Colonic mucosa (tissue), 4 donors: ENCODE measurements at regions of chr2 and their contacts with region 1.

Region 1: DNA sequence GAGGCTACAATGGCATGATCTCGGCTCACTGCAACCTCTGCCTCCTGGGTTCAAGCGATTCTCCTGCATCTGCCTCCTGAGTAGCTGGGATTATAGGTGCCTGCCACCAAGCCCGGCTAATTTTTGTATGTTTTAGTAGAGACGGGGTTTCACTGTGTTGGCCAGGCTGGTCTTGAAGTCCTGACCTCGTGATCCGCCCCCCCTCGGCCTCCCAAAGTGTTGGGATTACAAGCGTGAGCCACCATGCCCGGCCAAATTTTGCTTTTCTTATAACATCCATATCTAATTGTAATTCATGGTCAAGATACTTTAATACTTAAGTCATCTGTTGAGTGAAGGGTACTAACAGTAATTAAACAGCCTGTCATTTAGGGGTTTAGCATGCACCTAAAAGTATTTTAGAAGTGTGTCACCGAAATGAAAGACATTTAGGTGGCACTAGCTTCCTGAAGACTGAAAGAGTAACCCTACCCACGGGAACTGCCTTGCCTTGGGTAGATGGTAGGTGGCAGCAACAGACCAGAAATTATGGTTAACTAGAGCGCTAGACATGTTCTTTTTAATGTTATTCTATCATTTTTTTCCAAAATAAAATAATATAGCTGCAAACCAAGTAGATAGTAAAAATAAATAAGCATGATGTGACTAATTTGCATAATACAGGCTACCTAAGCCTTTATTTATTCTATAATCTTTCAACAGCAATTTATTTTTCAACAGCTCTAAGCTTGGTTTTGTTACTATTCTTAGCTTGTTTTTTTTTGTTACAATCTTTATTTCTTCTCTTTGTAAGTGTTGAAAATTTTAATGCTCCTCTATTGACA is 8.6 kb upstream of the ACYP2 start:
- DNase-seq: peak; percentile 38
- H3K4me3 ChIP-seq: no peak overlapping the region
- H3K27ac ChIP-seq: no peak overlapping the region
- H3K4me1 ChIP-seq: peaks cover 3% of the 10 kb centered on the region
- H3K27me3 ChIP-seq: no peaks in the 10 kb centered on the region
- CTCF ChIP-seq: peak; percentile 59

Region 2: GRCh38 chr2:54394392-54394791 is 287.5 kb after region 1 on chr2:
- intact Hi-C with region 1: no loop called
- DNase-seq: no peak
- H3K4me3 ChIP-seq: no peak overlapping the region
- H3K27ac ChIP-seq: no peak overlapping the region
- H3K4me1 ChIP-seq: no peaks in the 10 kb centered on the region
- H3K27me3 ChIP-seq: no peaks in the 10 kb centered on the region
- CTCF ChIP-seq: no peak

Region 3: DNA sequence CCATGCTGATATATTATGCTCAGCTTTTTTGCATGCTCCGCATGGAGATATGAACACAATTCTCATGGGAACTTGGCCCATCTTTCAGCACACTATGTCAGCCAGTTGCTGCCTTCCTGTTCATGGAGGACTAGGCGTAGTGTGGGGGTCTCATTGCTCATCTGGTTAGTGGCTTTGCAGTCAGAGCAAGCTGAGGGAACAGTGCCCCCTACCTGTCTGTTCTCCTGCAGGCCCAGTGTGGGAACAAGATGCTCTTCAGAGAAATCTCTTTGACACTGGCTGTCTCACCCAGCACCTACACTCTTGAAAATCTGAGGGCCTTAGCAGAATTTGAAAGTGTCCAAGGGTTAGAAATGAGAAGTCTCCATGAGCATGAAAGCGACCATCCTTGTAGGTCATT is 396.3 kb after region 1 on chr2:
- intact Hi-C with region 1: loop called (anchors 10 kb)
- DNase-seq: peak; percentile 30
- H3K4me3 ChIP-seq: no peak overlapping the region
- H3K27ac ChIP-seq: no peak overlapping the region
- H3K4me1 ChIP-seq: peaks cover 6% of the 10 kb centered on the region
- H3K27me3 ChIP-seq: no peaks in the 10 kb centered on the region
- CTCF ChIP-seq: peak; percentile 42

Region 4: GRCh38 chr2:54691445-54692135 is 584.7 kb after region 1 on chr2:
- intact Hi-C with region 1: no loop called
- DNase-seq: no peak
- H3K4me3 ChIP-seq: no peak overlapping the region
- H3K27ac ChIP-seq: no peak overlapping the region
- H3K4me1 ChIP-seq: no peaks in the 10 kb centered on the region
- H3K27me3 ChIP-seq: no peaks in the 10 kb centered on the region
- CTCF ChIP-seq: no peak

Region 5: DNA sequence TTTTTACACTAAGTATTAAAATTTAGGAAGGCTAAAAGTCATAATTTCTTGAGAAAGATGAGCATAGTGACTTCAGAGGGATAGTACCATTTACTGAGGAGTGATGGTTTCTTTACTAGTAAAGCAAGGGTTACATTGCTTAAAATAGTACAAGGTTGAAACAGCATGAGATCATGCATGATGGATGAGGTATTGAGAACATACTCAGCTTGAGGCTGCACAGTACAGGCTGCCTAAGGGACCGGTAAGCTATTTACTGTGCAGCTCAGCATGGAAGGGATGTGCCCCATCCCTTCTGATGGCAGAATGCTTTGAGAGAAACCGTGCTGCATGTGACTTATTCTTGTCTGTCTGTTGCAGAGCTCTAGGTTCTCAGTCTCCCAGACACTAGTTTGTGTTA is 738.7 kb after region 1 on chr2:
- intact Hi-C with region 1: loop called (anchors 10 kb)
- DNase-seq: no peak
- H3K4me3 ChIP-seq: no peak overlapping the region
- H3K27ac ChIP-seq: no peak overlapping the region
- H3K4me1 ChIP-seq: no peaks in the 10 kb centered on the region
- H3K27me3 ChIP-seq: no peaks in the 10 kb centered on the region
- CTCF ChIP-seq: no peak